ENCODE measurements at regions of chr7 and their contacts with region 1.

Region 1: DNA sequence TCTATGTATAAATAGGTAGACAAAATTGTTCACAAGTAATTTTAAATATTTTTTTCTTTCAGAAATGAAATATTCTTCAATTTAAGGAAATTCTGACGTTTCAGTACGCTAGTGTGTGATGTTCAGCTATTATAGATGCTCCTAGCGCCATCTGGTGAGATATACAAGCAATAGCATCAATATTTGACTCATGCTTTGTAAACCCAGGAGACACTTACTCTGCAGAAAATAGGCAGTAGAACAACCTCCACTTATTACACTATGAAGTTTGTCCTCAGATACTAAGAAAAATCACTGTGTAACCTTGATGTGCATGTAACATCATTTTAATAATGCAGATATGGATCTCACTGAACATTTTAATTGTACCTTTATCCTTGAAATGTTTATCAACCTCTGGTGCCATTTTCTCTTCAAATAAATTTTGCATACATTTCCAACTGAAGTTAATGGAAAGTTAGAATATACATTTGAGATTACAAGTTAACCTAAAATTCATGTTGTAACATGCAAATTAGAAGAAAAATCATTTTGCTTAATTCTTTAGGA is 151.5 kb upstream of the FAM3C start:
- DNase-seq: no peak
- H3K4me3 ChIP-seq: no peak overlapping the region
- H3K27ac ChIP-seq: no peak overlapping the region
- H3K4me1 ChIP-seq: peaks cover 0 to 9% (median 0%) of the 10 kb centered on the region in 6 donors
- H3K27me3 ChIP-seq: no peaks in the 10 kb centered on the region
- CTCF ChIP-seq: peak; percentile 43 to 80 (median 76)
- POLR2A ChIP-seq: no peak

Region 2: GRCh38 chr7:121366852-121367431 is 180.7 kb before region 1 on chr7:
- intact Hi-C with region 1: loop called (anchors 2 kb)
- DNase-seq: no peak
- H3K4me3 ChIP-seq: no peak overlapping the region
- H3K27ac ChIP-seq: peak overlapping the region in 4 of 8 donors; percentile 4 to 34 (median 14)
- H3K4me1 ChIP-seq: peaks cover 0 to 59% (median 37%) of the 10 kb centered on the region in 6 donors
- H3K27me3 ChIP-seq: no peaks in the 10 kb centered on the region
- CTCF ChIP-seq: peak; percentile 30 to 78 (median 71)
- POLR2A ChIP-seq: no peak

Measured in spleen (tissue), 13 donors.